Activated B cell treated with CpG ODN at 0.5 μM for 24 hours (primary cell): ENCODE measurements at regions of chr1 and their contacts with region 1.

Region 1: GRCh38 chr1:45686317-45687013 is at the start of gene GPBP1L1:
- DNase-seq: peak; percentile 98
- ATAC-seq: peak; percentile 73
- H3K4me3 Mint-ChIP-seq: peak within 1 kb of the TSS; percentile 99
- H3K27ac Mint-ChIP-seq: peak within 1 kb of the TSS; percentile 100
- H3K4me1 Mint-ChIP-seq: peaks cover 53% of the 10 kb centered on the region
- H3K27me3 Mint-ChIP-seq: no peaks in the 10 kb centered on the region
- CTCF ChIP-seq: no peak
- total RNA-seq, gene GPBP1L1: 133 and 138 TPM in 2 replicates

Region 2: GRCh38 chr1:44674113-44675000 is 1012.1 kb before region 1 on chr1 and contains the starts of genes ARMH1 and TMEM53:
- CTCF ChIA-PET with region 1: no interaction called
- POLR2A ChIA-PET with region 1: no interaction called
- intact Hi-C with region 1: loop called (anchors 1 kb)
- DNase-seq: peak; percentile 98
- ATAC-seq: peak; percentile 90
- H3K4me3 Mint-ChIP-seq: peak within 1 kb of the TSS; percentile 87
- H3K27ac Mint-ChIP-seq: peak within 1 kb of the TSS; percentile 93
- H3K4me1 Mint-ChIP-seq: peaks cover 32% of the 10 kb centered on the region
- H3K27me3 Mint-ChIP-seq: no peaks in the 10 kb centered on the region
- CTCF ChIP-seq: no peak
- total RNA-seq, gene ARMH1: 18.1 and 19.9 TPM in 2 replicates
- total RNA-seq, gene TMEM53: 4.6 and 4.8 TPM in 2 replicates

Region 3: DNA sequence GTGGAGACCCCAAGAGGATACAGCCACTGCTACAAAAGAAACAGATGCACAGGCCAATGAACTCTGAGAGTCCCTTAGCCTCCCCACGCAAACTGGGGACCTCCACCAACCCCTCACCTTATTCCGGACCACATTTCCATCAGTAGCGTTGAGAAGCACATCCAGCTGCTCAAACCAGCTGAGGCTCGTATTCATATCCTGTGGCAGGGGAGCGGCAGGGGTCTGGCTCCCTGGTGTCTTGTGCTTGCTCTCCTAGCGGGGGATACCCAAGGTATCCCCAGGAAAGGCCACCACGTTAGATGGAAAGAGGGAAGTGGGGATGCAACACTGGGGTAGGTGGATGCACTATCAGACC is 187.1 kb before region 1 on chr1:
- CTCF ChIA-PET with region 1: no interaction called
- POLR2A ChIA-PET with region 1: interaction called, 5 read pairs
- intact Hi-C with region 1: loop called (anchors 1 kb)
- DNase-seq: no peak
- ATAC-seq: no peak
- H3K4me3 Mint-ChIP-seq: peak overlapping the region; percentile 97
- H3K27ac Mint-ChIP-seq: peak overlapping the region; percentile 88
- H3K4me1 Mint-ChIP-seq: peaks cover 27% of the 10 kb centered on the region
- H3K27me3 Mint-ChIP-seq: no peaks in the 10 kb centered on the region
- CTCF ChIP-seq: no peak

Region 4: DNA sequence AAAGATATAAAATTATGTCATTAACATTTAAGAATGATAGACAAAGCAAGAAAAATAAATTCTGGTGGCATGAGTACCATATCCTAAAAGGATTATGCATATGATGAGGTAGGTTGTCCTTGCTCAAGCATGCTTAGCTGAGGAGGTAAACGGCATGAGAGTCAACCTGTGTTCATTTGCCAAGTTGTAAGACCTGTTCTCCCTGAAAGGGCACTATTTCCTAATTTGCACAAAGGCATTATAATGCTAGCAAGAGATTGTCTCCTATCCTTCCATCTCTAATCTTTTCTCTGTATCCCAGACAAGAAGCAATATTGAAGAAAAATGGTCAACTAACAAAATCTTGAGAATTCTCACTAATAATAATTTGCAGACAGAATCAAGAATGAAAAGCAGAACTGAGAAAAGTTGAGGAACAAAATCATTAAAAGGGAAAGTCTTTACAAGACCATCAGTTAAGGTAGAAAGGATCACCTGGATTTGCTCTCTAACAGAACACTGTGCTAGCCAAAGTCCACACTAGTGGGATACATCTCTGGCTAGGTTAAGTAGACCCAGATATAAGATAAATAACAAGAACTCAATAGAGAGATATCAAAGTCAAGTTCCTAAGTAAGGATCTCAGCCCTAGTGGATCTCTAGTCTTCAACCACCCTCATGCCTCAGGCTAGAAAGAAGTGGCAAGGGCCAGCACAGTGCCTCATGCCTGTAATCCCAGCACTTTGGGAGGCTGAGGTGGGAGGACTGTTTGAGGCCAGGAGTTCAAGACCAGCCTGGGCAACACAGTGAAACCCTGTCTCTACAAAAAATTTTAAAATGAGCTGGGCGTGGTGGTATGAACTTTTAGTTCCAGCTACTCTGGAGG is 44.2 kb after region 1 on chr1:
- CTCF ChIA-PET with region 1: no interaction called
- POLR2A ChIA-PET with region 1: interaction called, 3 read pairs
- intact Hi-C with region 1: loop called (anchors 5 kb)
- DNase-seq: no peak
- ATAC-seq: no peak
- H3K4me3 Mint-ChIP-seq: no peak overlapping the region
- H3K27ac Mint-ChIP-seq: no peak overlapping the region
- H3K4me1 Mint-ChIP-seq: peaks cover 11% of the 10 kb centered on the region
- H3K27me3 Mint-ChIP-seq: no peaks in the 10 kb centered on the region
- CTCF ChIP-seq: no peak

Region 5: DNA sequence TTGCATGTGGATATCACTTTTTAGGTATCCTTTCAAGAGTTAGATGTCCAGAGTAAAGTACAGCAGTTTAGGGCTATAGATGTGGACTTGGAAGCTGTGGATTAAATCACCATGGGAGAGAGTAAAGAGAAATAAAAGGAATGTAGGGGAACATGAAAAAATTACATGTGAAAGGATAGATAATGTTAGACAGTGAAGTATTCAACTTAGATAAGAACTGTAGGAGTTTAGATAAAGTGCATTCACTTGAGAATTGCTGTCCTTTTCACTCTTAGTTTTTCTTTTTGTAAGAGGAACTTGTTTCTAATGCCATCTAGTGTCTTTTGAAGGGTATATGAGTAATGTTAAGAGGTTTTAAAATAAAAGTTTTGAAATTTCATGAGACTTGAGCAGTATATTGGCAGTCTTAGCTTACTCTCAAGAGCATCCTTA is 157.0 kb after region 1 on chr1:
- CTCF ChIA-PET with region 1: interaction called, 3 read pairs
- POLR2A ChIA-PET with region 1: interaction called, 3 read pairs
- intact Hi-C with region 1: loop called (anchors 1 kb)
- DNase-seq: no peak
- ATAC-seq: no peak
- H3K4me3 Mint-ChIP-seq: no peak overlapping the region
- H3K27ac Mint-ChIP-seq: no peak overlapping the region
- H3K4me1 Mint-ChIP-seq: peaks cover 12% of the 10 kb centered on the region
- H3K27me3 Mint-ChIP-seq: no peaks in the 10 kb centered on the region
- CTCF ChIP-seq: no peak

Region 6: GRCh38 chr1:46340404-46341221 is 654.1 kb after region 1 on chr1 and contains the start of gene NSUN4:
- CTCF ChIA-PET with region 1: no interaction called
- POLR2A ChIA-PET with region 1: interaction called, 6 read pairs
- intact Hi-C with region 1: loop called (anchors 10 kb)
- DNase-seq: peak; percentile 69
- ATAC-seq: peak; percentile 81
- H3K4me3 Mint-ChIP-seq: peak within 1 kb of the TSS; percentile 99
- H3K27ac Mint-ChIP-seq: peak within 1 kb of the TSS; percentile 98
- H3K4me1 Mint-ChIP-seq: peaks cover 33% of the 10 kb centered on the region
- H3K27me3 Mint-ChIP-seq: no peaks in the 10 kb centered on the region
- CTCF ChIP-seq: peak; percentile 50
- total RNA-seq, gene NSUN4: 35.3 and 38.6 TPM in 2 replicates